ENCODE measurements at regions of chr17 and their contacts with region 1.

Region 1: GRCh38 chr17:76132574-76133338 is 8.3 kb downstream of the FOXJ1 start:
- DNase-seq: peak; percentile 99 to 100
- H3K4me3 ChIP-seq: no peak overlapping the region
- H3K4me3 Mint-ChIP-seq: peak overlapping the region; percentile 52
- H3K27ac Mint-ChIP-seq: peak overlapping the region; percentile 85
- H3K4me1 ChIP-seq: peaks cover 77% of the 10 kb centered on the region
- H3K4me1 Mint-ChIP-seq: peaks cover 61% of the 10 kb centered on the region
- H3K27me3 ChIP-seq: no peaks in the 10 kb centered on the region
- H3K27me3 Mint-ChIP-seq: no peaks in the 10 kb centered on the region
- CTCF ChIP-seq: peak; percentile 56 to 79

Region 2: DNA sequence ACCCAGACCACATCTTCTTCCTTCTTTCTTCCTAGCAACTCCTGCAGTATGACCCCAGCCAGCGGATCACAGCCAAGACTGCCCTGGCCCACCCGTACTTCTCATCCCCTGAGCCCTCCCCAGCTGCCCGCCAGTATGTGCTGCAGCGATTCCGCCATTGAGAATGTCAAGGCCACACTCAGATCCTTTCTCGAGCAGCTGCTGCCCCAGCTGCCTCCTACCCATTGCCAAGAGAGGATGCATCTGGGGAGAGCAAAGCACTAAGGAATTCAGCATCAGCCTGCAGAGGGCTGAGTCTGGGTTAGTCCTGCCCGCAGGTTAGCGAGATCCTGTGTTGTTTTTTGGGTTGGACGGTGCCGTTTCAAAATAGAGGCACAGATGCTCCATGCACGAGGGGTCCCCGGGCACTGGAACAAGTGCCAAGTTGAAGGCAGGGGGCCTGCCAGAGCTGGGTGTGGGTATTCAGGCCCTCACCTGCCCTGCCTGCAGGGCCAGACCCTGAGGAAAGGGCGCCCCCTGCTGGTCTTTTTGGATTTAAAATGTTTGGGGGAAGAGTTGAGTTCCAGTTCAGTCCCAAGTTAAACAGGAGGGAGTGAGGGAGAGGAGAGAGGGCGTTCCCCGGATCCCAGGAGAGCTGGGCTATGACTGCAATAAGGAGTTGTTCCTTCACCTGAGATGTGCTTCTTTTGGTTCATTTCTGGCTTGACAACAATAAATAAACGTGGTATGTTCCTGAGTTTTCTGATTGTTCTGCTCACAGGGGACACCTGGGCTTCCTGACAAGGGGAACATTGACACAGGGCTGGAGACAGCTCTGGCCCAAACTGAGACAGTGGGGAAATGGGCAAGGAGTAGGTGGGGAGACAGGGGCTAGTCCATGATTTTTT is 127.2 kb before region 1 on chr17:
- CTCF ChIA-PET with region 1: interaction called, 10 read pairs
- POLR2A ChIA-PET with region 1: no interaction called
- intact Hi-C with region 1: no loop called
- DNase-seq: peak; percentile 85 to 93
- H3K4me3 ChIP-seq: no peak overlapping the region
- H3K4me3 Mint-ChIP-seq: no peak overlapping the region
- H3K27ac Mint-ChIP-seq: peak overlapping the region; percentile 30
- H3K4me1 ChIP-seq: peaks cover 10% of the 10 kb centered on the region
- H3K4me1 Mint-ChIP-seq: peaks cover 10% of the 10 kb centered on the region
- H3K27me3 ChIP-seq: no peaks in the 10 kb centered on the region
- H3K27me3 Mint-ChIP-seq: no peaks in the 10 kb centered on the region
- CTCF ChIP-seq: peak; percentile 68 to 92

Region 3: GRCh38 chr17:76121932-76122430 is 10.8 kb before region 1 on chr17:
- CTCF ChIA-PET with region 1: interaction called, 41 read pairs
- POLR2A ChIA-PET with region 1: no interaction called
- intact Hi-C with region 1: no loop called
- DNase-seq: no peak
- H3K4me3 ChIP-seq: no peak overlapping the region
- H3K4me3 Mint-ChIP-seq: no peak overlapping the region
- H3K27ac Mint-ChIP-seq: peak overlapping the region; percentile 14
- H3K4me1 ChIP-seq: peaks cover 7% of the 10 kb centered on the region
- H3K4me1 Mint-ChIP-seq: peaks cover 33% of the 10 kb centered on the region
- H3K27me3 ChIP-seq: no peaks in the 10 kb centered on the region
- H3K27me3 Mint-ChIP-seq: no peaks in the 10 kb centered on the region
- CTCF ChIP-seq: no peak

Region 4: DNA sequence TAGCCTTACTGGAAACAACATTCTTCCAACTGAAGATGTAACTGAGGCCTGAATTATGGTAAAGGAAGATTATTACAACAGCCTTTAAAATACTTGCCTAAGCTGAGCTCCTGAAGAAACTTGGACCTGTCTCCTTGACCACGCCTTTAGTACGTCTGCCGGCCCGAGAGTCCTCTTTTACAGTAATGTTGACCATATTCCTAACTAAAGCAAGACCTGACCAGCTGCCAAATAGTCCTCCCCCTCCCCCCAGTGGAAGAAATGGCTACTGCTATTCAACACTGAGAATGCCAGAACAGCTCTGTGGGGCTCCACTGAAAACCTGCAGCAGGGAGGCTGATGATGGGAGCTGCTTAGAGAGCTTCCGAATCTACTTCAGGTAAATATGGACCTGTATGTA is 20.9 kb after region 1 on chr17:
- CTCF ChIA-PET with region 1: interaction called, 13 read pairs
- POLR2A ChIA-PET with region 1: no interaction called
- intact Hi-C with region 1: no loop called
- DNase-seq: peak; percentile 63 to 70
- H3K4me3 ChIP-seq: no peak overlapping the region
- H3K4me3 Mint-ChIP-seq: no peak overlapping the region
- H3K27ac Mint-ChIP-seq: no peak overlapping the region
- H3K4me1 ChIP-seq: no peaks in the 10 kb centered on the region
- H3K4me1 Mint-ChIP-seq: no peaks in the 10 kb centered on the region
- H3K27me3 ChIP-seq: no peaks in the 10 kb centered on the region
- H3K27me3 Mint-ChIP-seq: no peaks in the 10 kb centered on the region
- CTCF ChIP-seq: peak; percentile 64 to 66

Region 5: DNA sequence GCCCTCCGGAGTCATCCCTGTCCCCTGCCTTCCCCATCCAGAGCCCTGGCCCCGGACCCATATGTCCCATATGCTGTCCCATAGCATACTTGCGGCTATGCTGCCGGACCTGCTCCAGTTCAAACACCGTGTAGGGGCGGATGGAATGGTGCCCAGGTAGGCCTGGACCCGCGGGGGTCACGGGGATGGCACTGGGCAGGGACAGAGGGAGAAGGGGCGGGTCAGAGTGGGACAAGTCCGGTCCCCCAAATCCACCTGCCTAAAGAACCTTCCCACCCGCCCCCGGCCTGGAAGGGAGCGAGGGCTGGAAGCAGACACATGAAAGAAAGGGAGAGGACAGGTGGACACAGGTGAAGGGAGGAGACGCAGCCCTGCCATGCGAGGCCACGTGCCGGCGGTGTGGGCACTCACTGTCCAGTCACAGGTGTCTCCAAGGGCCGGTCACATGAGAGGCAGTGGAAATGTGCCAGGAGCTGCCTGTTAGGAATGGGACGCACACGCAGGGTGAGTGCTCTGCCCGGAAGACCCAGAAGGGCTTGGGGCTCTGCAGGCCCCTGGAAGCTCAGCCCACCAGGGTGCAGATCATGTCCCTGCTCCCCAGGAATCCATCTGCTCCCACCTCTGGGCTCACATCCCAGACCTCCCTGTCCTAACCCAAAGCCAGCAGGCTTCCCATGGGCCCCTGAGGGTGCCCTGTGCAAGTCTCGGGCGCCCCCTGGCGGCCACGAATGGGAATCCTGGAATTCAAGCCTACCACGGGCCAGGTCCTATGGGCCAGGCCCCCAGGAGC is 146.4 kb after region 1 on chr17:
- CTCF ChIA-PET with region 1: interaction called, 16 read pairs
- POLR2A ChIA-PET with region 1: no interaction called
- intact Hi-C with region 1: no loop called
- DNase-seq: peak; percentile 87 to 94
- H3K4me3 ChIP-seq: no peak overlapping the region
- H3K4me3 Mint-ChIP-seq: no peak overlapping the region
- H3K27ac Mint-ChIP-seq: no peak overlapping the region
- H3K4me1 ChIP-seq: peaks cover 16% of the 10 kb centered on the region
- H3K4me1 Mint-ChIP-seq: peaks cover 5% of the 10 kb centered on the region
- H3K27me3 ChIP-seq: no peaks in the 10 kb centered on the region
- H3K27me3 Mint-ChIP-seq: no peaks in the 10 kb centered on the region
- CTCF ChIP-seq: peak; percentile 98

Region 6: DNA sequence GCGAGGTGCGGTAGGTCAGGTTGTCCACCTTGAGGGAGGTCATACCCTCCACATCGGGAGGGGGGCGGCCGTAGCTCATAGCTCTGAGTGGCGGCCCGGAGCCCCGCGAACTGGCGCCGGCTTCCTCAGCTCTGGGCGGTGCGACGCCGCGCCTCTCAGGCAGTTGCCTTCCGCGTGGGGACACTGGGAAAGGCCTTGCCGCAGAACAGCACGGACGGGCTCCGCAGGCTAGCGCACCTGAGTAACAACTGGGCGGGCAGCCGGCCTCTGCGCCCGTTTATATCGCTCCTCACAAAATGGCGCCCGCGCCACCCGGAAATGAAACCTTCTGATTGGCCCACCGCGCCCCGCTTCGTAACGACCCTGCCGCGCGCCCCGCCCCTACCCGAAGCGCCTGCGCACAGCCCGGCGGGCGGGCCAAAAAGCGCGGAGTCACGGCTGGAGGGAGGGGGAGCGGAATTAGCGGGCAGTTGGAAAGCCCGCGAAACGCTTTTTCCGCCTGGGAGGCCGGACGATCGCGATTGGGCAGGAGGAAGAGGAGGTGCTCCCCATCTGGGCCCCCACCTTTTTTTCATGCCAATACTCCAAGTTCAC is 604.4 kb after region 1 on chr17 and contains the start of gene SRSF2:
- CTCF ChIA-PET with region 1: no interaction called
- POLR2A ChIA-PET with region 1: no interaction called
- intact Hi-C with region 1: no loop called
- DNase-seq: peak; percentile 99
- H3K4me3 ChIP-seq: peak within 1 kb of the TSS; percentile 97
- H3K4me3 Mint-ChIP-seq: peak within 1 kb of the TSS; percentile 96
- H3K27ac Mint-ChIP-seq: peak within 1 kb of the TSS; percentile 96
- H3K4me1 ChIP-seq: peaks cover 18% of the 10 kb centered on the region
- H3K4me1 Mint-ChIP-seq: peaks cover 21% of the 10 kb centered on the region
- H3K27me3 ChIP-seq: no peaks in the 10 kb centered on the region
- H3K27me3 Mint-ChIP-seq: no peaks in the 10 kb centered on the region
- CTCF ChIP-seq: no peak
- total RNA-seq, gene SRSF2: 349 and 356 TPM in 2 replicates

Measured in Caco-2 (cell line).